GM12878 (cell line): ENCODE measurements at regions of chr5 and their contacts with region 1.

Region 1: DNA sequence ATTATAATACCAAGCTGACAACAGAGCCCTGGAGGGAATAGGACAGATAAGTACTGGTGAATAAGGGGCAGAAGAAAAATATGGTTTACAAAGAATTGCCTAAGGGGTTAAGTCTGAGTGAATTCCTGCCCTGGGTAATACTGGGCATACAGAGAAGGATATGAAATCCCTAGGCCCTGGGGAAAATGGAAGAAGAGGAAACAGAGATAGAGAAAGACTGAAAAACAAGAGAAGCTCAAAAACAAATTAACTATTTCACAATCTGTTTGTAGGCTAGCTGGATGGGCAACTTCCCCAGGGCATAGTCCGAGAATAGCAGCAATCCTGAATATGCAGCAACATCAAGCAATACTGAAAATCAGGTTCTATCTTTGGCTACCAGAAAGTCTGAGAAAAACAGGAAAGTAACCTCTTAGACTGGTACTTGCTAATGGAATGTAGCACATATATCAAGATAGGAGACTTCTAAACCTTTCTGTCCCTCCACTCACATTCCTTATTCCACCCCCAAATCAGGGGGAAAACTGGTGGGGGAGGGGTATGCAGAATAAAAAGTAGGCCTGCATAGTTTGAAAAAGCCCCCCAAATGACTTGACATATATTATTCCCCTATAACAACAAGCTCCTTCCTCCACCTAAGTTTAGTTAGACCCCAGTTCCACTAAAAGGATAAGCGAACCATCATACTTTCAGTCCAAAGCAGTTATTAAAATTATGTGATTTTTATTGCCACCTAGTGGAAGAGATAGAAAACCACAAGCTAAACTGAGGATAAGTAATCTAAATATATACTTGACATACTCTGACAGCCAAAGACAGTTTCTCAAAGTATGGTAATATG is 20.6 kb downstream of the SLC38A9 start:
- DNase-seq: no peak
- ATAC-seq: peak; percentile 67
- H3K4me3 ChIP-seq: no peak overlapping the region
- H3K27ac ChIP-seq: no peak overlapping the region
- H3K4me1 ChIP-seq: no peaks in the 10 kb centered on the region
- H3K27me3 ChIP-seq: no peaks in the 10 kb centered on the region
- CTCF ChIP-seq: peak; percentile 26 to 50 (median 40); a peak in 4 of 6 replicates
- EP300 ChIP-seq: no peak
- POLR2A ChIP-seq: no peak
- RAD21 ChIP-seq: peak; percentile 58

Region 2: DNA sequence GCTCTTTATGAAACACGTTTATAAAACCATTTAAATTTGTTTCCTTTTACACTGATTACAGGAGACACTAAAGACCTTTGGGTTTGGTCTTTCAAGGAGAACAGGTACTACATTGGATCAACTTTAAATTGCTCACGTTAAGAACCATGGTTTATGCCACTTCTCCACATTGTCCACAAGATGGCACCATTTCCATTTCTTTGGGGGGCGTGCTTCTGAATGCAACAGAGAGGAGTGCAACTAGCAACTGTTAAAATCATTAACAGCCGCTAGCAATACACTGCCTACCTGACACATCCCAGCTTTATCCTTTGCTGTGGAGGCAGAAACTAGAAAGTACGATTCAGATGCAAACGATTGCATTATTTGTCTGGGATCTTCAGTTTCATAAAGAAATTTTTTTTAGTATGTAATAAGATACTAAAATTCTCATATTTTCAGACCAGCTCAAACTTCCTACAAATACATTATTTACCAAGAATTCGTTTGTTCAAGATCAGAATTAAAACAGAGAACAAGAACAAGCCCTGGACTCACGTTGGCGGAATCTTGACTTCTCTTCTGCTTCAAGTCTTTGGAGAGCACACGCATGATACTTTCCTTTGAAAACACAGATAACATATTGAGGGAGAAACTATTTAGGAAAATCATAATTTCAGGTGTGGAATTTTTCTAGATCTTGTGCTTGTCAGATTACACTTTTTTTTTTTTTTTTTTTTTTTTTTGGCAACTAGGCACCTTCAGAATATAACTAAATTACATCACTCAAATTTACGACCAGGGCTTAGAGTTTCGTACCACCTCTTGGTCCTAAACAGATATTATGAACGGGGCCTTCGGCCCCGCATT is 519.2 kb before region 1 on chr5:
- CTCF ChIA-PET with region 1: interaction called, 23 read pairs
- POLR2A ChIA-PET with region 1: no interaction called
- RAD21 ChIA-PET with region 1: interaction called, 9 read pairs
- SMC1A ChIA-PET with region 1: interaction called, 7 read pairs
- in situ Hi-C with region 1: loop called (anchors 5 kb)
- intact Hi-C with region 1: loop called (anchors 2 kb)
- DNase-seq: peak; percentile 45
- ATAC-seq: peak; percentile 84
- H3K4me3 ChIP-seq: peak overlapping the region; percentile 69
- H3K27ac ChIP-seq: no peak overlapping the region
- H3K4me1 ChIP-seq: peaks cover 9% of the 10 kb centered on the region
- H3K27me3 ChIP-seq: peaks cover 3 to 22% of the 10 kb centered on the region in 2 experiments; a peak in 3 of 4 replicates
- CTCF ChIP-seq: peak; percentile 60 to 89 (median 82); a peak in 5 of 6 replicates
- EP300 ChIP-seq: no peak
- POLR2A ChIP-seq: no peak
- RAD21 ChIP-seq: peak; percentile 92

Region 3: DNA sequence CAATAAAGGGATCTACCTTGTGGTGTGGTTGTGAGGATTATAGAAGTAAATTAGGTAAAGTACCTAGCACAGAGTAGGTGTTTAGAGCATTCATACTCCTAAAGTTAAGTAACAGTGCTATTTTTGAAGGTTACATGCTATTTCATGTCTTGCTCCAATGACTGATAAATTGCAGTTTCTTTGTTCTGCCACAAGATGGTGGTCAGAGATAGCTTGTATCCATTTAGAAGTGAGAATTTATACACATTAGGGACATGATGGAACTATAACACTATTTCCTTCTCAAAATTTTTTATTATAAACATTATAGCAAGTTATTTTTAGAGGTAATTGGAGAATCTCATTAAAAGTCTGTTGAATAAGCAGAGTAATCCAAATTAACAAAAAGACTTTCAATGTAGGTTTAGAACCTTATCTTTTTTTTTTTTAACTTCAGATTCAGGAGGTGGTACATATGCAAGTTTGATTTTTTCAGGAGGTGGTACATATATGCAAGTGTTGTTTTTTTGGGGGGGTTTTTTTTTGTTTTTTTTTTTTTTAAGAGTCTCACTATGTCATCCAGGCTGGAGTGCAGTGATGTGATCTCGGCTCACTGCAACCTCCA is 366.6 kb before region 1 on chr5:
- CTCF ChIA-PET with region 1: interaction called, 10 read pairs
- POLR2A ChIA-PET with region 1: no interaction called
- RAD21 ChIA-PET with region 1: no interaction called
- SMC1A ChIA-PET with region 1: interaction called, 5 read pairs
- in situ Hi-C with region 1: no loop called
- intact Hi-C with region 1: loop called (anchors 1 kb)
- DNase-seq: no peak
- ATAC-seq: peak; percentile 84
- H3K4me3 ChIP-seq: no peak overlapping the region
- H3K27ac ChIP-seq: no peak overlapping the region
- H3K4me1 ChIP-seq: no peaks in the 10 kb centered on the region
- H3K27me3 ChIP-seq: no peaks in the 10 kb centered on the region
- CTCF ChIP-seq: peak; percentile 48 to 79 (median 53); a peak in 5 of 6 replicates
- EP300 ChIP-seq: no peak
- POLR2A ChIP-seq: no peak
- RAD21 ChIP-seq: peak; percentile 79

Region 4: DNA sequence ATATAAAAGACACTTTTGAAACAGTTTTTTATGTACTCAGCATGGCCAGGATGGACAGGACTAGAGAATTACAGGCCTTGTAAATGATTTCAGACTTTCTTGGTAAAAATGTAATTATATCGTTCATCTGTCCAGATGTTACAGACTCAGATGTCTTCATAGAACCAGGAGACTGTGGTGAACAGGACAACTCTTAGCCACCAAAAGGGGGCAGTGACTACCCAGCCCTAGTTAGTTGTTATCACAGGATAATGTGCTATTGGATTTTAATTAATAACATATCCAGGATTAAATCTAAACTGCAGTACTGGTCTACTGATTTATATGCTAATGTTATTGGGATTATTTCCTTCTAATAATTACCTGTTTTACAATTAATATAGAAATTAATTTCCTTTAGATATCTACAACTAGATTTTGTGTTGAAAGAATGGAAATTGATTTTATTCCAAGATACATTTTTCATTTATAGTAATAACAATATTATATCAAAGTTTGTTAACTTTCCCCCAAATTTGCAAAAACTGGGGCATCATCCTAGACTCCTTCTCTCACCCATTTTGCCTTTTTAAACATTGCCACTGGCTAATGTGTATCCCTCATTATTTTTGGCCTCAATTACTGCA is 284.3 kb before region 1 on chr5:
- CTCF ChIA-PET with region 1: interaction called, 10 read pairs
- POLR2A ChIA-PET with region 1: no interaction called
- RAD21 ChIA-PET with region 1: interaction called, 3 read pairs
- SMC1A ChIA-PET with region 1: interaction called, 10 read pairs
- in situ Hi-C with region 1: no loop called
- intact Hi-C with region 1: loop called (anchors 2 kb)
- DNase-seq: no peak
- ATAC-seq: peak; percentile 67
- H3K4me3 ChIP-seq: no peak overlapping the region
- H3K27ac ChIP-seq: no peak overlapping the region
- H3K4me1 ChIP-seq: no peaks in the 10 kb centered on the region; the same call in 1 of the 2 replicates
- H3K27me3 ChIP-seq: no peaks in the 10 kb centered on the region
- CTCF ChIP-seq: peak; percentile 44 to 46 (median 46); a peak in 3 of 6 replicates
- EP300 ChIP-seq: no peak
- POLR2A ChIP-seq: no peak
- RAD21 ChIP-seq: peak; percentile 63

Region 5: GRCh38 chr5:55534436-55535198 is 156.9 kb before region 1 on chr5 and contains the start of gene PLPP1:
- CTCF ChIA-PET with region 1: no interaction called
- POLR2A ChIA-PET with region 1: no interaction called
- RAD21 ChIA-PET with region 1: no interaction called
- SMC1A ChIA-PET with region 1: interaction called, 5 read pairs
- in situ Hi-C with region 1: no loop called
- intact Hi-C with region 1: loop called (anchors 10 kb)
- DNase-seq: peak; percentile 38
- ATAC-seq: peak; percentile 89
- H3K4me3 ChIP-seq: peak within 1 kb of the TSS; percentile 80
- H3K27ac ChIP-seq: peak within 1 kb of the TSS; percentile 66
- H3K4me1 ChIP-seq: peaks cover 12% of the 10 kb centered on the region
- H3K27me3 ChIP-seq: no peaks in the 10 kb centered on the region
- CTCF ChIP-seq: no peak
- EP300 ChIP-seq: no peak
- POLR2A ChIP-seq: peak; percentile 78
- RAD21 ChIP-seq: no peak
- polyA plus RNA-seq, gene PLPP1: 3.0 TPM

Region 6: GRCh38 chr5:55737793-55738192 is 46.3 kb after region 1 on chr5 and contains the start of gene DDX4:
- CTCF ChIA-PET with region 1: no interaction called
- POLR2A ChIA-PET with region 1: no interaction called
- RAD21 ChIA-PET with region 1: no interaction called
- SMC1A ChIA-PET with region 1: no interaction called
- in situ Hi-C with region 1: no loop called
- intact Hi-C with region 1: no loop called
- DNase-seq: no peak
- ATAC-seq: no peak
- H3K4me3 ChIP-seq: no peak within 1 kb of the TSS
- H3K27ac ChIP-seq: no peak within 1 kb of the TSS
- H3K4me1 ChIP-seq: no peaks in the 10 kb centered on the region
- H3K27me3 ChIP-seq: no peaks in the 10 kb centered on the region
- CTCF ChIP-seq: no peak
- EP300 ChIP-seq: no peak
- POLR2A ChIP-seq: no peak
- RAD21 ChIP-seq: no peak
- polyA plus RNA-seq, gene DDX4: 0.08 to 0.09 TPM